Activated CD8-positive, alpha-beta T cell treated with anti-CD3 and anti-CD28 coated beads for 36 hours (primary cell): ENCODE measurements at regions of chr15 and their contacts with region 1.

Region 1: DNA sequence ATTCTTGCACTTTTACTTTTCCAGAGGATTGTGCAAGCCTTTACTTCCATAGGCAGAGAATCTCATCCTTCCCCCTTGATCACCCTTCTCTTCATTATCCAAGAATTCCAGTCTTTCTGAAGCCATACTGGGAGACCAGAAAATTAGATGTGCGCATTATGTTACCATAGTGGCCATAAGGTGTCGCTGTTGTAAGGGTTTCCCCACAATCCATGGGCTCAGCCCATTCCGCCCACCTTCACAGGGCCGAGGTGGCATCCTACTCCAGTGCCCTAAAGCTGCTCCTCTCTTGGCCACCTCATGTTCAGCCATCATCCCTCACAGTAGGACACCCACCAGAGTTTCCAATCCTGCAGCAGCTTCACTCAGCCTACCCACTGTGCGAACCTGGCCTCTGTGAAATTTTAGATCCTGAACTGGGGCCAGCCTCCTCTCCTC is 35.0 kb downstream of the CTSH start:
- DNase-seq: peak; percentile 46
- ATAC-seq: peak; percentile 67
- H3K4me3 Mint-ChIP-seq: no peak overlapping the region
- H3K27ac Mint-ChIP-seq: no peak overlapping the region
- H3K4me1 Mint-ChIP-seq: peaks cover 11% of the 10 kb centered on the region
- H3K27me3 Mint-ChIP-seq: no peaks in the 10 kb centered on the region
- CTCF ChIP-seq: peak; percentile 62

Region 2: DNA sequence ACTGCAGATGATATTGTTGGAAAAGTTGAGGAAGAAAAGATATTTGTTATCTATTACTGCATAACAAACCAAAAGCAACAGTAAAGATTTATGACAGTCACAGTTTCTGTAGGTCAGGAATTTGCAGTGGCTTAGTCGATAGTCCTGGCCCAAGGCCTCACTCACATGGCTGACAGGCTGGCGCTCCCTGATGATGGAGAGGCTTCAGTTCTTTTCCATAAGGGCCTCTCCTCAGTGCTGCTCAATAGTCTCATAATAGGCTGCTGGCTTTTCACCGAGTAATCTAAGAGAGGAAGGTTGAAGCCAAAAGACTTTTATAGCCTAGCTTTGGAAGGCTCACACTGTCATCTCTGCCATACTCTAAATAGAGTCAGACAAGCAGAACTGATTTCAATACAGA is 454.1 kb before region 1 on chr15:
- CTCF ChIA-PET with region 1: no interaction called
- POLR2A ChIA-PET with region 1: no interaction called
- intact Hi-C with region 1: no loop called
- DNase-seq: no peak
- ATAC-seq: no peak
- H3K4me3 Mint-ChIP-seq: no peak overlapping the region
- H3K27ac Mint-ChIP-seq: no peak overlapping the region
- H3K4me1 Mint-ChIP-seq: peaks cover 70% of the 10 kb centered on the region
- H3K27me3 Mint-ChIP-seq: no peaks in the 10 kb centered on the region
- CTCF ChIP-seq: no peak

Region 3: DNA sequence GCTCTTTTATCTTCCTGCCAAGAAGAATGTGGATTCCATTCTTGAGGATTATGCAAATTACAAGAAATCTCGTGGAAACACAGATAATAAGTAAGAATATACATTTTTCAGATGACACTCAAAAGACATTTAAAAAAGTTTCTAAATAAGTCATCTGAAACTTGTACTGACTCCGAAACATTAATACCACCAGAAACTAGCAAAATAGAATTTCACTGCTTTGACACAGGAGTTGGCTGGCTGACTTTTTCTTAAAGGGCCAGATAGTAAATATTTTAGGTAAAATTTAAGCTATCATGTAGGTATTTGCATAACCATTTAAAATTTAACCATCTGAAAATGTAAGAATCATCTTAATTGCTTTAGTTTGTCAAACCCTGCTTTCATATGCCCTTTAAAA is 16.3 kb before region 1 on chr15:
- CTCF ChIA-PET with region 1: interaction called, 14 read pairs
- POLR2A ChIA-PET with region 1: interaction called, 5 read pairs
- intact Hi-C with region 1: no loop called
- DNase-seq: no peak
- ATAC-seq: no peak
- H3K4me3 Mint-ChIP-seq: no peak overlapping the region
- H3K27ac Mint-ChIP-seq: peak overlapping the region; percentile 10
- H3K4me1 Mint-ChIP-seq: peaks cover 22% of the 10 kb centered on the region
- H3K27me3 Mint-ChIP-seq: no peaks in the 10 kb centered on the region
- CTCF ChIP-seq: no peak

Region 4: DNA sequence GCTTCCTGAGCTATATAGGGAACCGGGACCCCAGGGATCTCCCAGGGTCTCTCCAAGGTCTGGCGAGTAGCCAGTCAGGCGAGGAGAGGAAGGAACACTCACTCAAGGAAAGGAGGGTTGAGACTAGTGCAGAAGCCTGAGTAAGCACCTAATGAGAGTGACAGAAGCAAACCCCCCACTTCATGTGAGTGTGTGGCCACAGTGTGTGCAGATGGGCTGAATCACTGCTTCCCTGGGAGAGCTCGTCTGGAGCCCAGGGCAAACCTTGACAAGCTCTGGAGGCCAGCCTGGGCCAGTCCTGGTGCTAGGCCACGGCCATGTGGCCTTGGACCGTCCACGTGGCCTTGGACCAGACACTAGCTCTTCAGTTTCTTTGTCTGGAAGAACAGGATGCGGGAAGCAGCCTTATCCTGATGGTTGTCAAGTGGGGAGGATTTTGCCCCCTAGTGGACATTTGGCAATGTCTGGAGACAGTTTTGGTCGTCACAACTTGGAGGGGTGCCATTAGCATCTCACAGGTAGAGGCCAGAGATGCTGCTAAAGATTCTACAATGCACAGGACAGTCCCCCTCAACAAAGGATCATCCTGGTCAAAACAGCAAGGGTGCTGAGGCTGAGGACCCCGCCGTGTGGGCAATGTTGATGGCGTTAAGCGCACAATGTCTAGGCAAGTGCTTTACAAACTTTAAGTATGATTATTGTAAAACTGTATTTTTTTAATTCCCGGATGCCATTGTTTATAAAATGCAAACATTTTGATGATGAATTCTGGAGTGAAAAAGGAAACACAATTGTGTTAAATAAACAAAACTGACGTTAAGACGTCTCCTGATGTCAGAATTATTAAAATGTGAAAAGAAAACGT is 69.9 kb after region 1 on chr15:
- CTCF ChIA-PET with region 1: interaction called, 32 read pairs
- POLR2A ChIA-PET with region 1: no interaction called
- intact Hi-C with region 1: no loop called
- DNase-seq: peak; percentile 52
- ATAC-seq: peak; percentile 61
- H3K4me3 Mint-ChIP-seq: no peak overlapping the region
- H3K27ac Mint-ChIP-seq: no peak overlapping the region
- H3K4me1 Mint-ChIP-seq: no peaks in the 10 kb centered on the region
- H3K27me3 Mint-ChIP-seq: peaks cover 2% of the 10 kb centered on the region
- CTCF ChIP-seq: peak; percentile 93

Region 5: DNA sequence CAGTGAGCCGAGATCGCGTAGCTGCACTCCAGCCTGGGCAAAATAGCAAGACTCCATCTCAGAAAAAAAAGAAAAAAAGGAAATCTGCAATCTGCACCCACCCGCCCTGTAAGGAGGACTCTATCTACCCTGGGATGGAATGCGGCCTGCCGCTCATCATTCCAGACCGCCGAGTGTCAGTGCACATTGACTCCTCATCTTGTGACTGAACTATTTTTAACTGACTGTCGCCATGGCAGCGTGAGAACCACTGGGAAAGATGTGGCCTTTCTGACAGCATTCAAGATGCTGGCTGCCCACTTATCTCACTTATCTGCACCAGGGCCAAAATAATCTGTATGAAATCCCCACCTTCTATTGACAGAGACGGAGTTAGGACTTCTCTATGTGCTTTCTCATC is 333.9 kb after region 1 on chr15:
- CTCF ChIA-PET with region 1: no interaction called
- POLR2A ChIA-PET with region 1: no interaction called
- intact Hi-C with region 1: no loop called
- DNase-seq: no peak
- ATAC-seq: no peak
- H3K4me3 Mint-ChIP-seq: no peak overlapping the region
- H3K27ac Mint-ChIP-seq: no peak overlapping the region
- H3K4me1 Mint-ChIP-seq: no peaks in the 10 kb centered on the region
- H3K27me3 Mint-ChIP-seq: peaks cover 11% of the 10 kb centered on the region
- CTCF ChIP-seq: no peak